Cardiac septum (tissue), 1 donor: ENCODE measurements at regions of chr9 and their contacts with region 1.

Region 1: DNA sequence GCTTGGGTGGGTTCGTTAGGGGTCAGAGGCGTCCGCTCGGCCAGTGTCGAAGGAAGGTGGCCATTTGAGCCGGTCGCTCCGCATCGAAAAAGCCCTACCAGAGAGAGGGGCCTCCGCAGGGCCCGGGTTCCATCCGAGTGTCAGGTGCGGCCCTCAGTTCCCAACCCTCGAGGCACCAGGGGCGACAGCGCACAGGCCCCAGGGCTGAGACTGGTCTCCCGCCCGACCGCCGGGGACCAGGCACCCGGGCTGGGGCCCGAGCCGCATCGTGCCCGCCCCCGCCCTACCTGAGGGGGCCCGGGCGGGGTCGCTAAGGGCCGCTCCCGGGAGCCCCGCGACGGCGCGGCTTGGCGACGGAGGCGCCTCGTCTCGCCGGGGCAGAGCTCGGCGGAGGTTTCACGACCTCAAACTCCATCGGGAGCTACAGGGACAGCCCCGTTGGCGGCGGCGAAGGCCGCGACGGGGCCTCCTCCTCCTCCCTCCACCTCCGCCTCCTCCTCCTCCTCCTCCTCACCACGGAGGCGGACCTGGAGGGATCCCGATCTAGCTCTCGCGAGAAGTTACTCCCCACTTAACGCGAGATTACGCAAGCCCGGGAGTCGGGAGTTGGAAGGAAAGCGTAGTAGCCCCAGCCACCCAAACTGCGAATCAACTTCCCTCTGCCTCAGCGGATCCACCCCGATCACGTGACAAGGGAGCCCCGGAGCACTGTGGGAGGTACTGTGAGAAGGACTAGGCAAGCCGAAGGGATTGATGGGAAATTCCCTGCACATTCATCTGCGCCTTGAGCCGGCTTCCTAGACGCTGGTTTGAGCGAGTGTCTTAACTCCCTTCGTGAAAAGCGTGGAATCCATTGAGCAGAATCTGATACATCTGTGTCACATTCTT is at the start of gene RC3H2:
- DNase-seq: peak; percentile 100
- total RNA-seq, gene RC3H2: 47.3 TPM

Region 2: DNA sequence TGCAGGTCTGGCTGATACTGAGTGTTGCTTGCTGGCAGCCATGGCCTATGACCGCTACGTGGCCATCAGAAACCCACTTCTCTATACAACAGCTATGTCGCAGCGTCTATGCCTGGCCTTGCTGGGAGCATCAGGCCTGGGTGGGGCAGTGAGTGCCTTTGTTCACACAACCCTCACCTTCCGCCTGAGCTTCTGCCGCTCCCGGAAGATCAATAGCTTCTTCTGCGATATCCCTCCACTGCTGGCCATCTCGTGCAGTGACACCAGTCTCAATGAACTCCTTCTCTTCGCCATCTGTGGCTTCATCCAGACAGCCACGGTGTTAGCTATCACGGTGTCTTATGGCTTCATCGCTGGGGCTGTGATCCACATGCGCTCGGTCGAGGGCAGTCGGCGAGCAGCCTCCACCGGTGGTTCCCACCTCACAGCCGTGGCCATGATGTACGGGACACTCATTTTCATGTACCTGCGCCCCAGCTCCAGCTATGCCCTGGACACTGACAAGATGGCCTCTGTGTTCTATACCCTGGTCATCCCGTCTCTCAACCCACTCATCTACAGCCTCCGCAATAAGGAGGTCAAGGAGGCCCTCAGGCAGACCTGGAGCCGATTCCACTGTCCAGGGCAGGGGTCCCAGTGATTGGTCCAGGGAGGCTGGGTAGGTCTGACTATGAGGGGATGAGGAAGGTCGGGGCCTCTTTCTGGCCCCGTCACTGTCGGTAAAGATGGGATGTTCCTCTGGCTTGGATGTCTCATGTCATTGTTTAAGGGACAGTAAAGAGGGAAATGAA is 115.6 kb before region 1 on chr9:
- intact Hi-C with region 1: no loop called
- DNase-seq: no peak

Region 3: GRCh38 chr9:122940603-122941559 is 35.8 kb after region 1 on chr9 and contains the start of gene RABGAP1:
- intact Hi-C with region 1: loop called (anchors 2 kb)
- DNase-seq: peak; percentile 100
- total RNA-seq, gene RABGAP1: 49.3 TPM

Region 4: GRCh38 chr9:122954253-122954691 is 49.2 kb after region 1 on chr9:
- intact Hi-C with region 1: no loop called
- DNase-seq: no peak